ENCODE measurements at regions of chr7 and their contacts with region 1.

Region 1: DNA sequence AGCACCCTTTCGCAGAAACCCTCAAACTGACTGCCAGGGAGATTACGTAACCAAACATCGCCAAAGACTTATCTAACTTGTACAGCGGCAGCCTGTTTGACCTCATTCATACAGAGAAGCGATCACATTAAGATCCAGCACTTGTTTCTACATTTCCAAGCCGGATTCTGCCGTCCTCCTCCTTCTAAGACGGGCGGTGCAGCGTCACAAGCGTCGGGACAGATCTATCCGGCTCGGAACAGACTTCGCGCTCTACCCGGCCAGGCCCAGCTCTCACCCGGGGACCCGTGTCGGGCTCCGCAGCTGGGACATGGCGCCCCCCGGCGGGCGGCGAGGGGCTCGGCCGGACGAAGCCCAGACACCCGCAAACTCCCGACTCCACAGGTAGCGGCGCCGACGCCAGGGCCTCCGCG is 373 bp downstream of the H2AZ2 start:
- DNase-seq: peak; percentile 82 to 87
- ATAC-seq: peak; percentile 78 to 82
- H3K4me3 ChIP-seq: peak overlapping the region; percentile 65 to 72 (median 66)
- H3K27ac ChIP-seq: peak overlapping the region; percentile 90 to 93 (median 92)
- H3K4me1 ChIP-seq: peaks cover 24 to 43% of the 10 kb centered on the region in 2 donors
- H3K27me3 ChIP-seq: no peaks in the 10 kb centered on the region
- CTCF ChIP-seq: peak; percentile 92 to 98 (median 98)
- POLR2A ChIP-seq: no peak

Region 2: GRCh38 chr7:44490351-44491200 is 356.9 kb before region 1 on chr7 and contains the start of gene NUDCD3:
- in situ Hi-C with region 1: no loop called
- intact Hi-C with region 1: loop called (anchors 5 kb)
- DNase-seq: peak; percentile 83
- ATAC-seq: peak; percentile 86 to 91
- H3K4me3 ChIP-seq: peak within 1 kb of the TSS; percentile 76 to 96 (median 88)
- H3K27ac ChIP-seq: peak within 1 kb of the TSS; percentile 90 to 99 (median 96)
- H3K4me1 ChIP-seq: peaks cover 39 to 40% of the 10 kb centered on the region in 2 donors
- H3K27me3 ChIP-seq: no peaks in the 10 kb centered on the region
- CTCF ChIP-seq: peak; percentile 7 to 48 (median 23)
- POLR2A ChIP-seq: peak; percentile 64 to 80
- total RNA-seq, gene NUDCD3: 76.2 to 93.4 (median 77.0) TPM

Region 3: DNA sequence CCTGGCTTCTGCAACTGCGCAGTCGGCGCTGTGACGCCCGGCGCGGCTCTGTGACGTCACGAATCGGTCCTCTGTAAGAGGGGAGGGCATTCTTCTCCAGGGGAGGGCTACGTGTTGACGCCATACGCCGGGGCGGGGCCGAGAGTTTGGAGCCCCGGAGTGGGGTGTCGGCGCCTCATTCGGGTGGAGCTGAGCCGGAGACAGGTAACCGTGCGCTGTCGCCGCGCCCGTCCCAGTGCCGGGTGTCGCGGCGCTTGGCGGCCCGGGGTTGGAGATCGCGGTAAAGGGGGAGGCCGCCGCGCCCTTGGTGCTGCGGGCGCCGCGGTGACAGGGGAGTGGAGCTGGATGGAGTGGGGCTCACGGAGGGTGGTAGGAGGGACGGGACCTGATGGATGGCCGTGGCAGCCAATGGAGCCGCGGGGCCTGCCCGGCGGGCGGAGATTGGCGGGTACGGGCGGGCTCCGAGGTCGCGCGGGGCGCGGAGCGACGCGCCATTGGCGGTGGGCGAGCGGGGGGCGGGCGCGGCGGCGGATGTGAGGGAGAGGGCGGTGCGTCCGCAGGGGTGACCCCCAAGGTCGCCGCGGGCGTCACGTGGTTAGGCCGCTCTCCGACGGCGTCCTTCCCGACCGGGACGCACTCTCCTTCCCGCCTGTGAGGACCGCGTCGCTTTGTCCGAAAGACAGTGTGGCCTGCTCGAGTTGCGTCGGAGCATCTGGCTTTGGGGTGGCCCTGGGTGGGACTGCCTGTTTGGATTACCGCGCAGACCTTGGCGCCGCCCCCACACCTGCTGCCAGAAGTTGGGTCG is 240.9 kb before region 1 on chr7 and contains the start of gene OGDH:
- in situ Hi-C with region 1: no loop called
- intact Hi-C with region 1: loop called (anchors 5 kb)
- DNase-seq: peak; percentile 98
- ATAC-seq: peak; percentile 88 to 92
- H3K4me3 ChIP-seq: peak within 1 kb of the TSS; percentile 72 to 88 (median 82)
- H3K27ac ChIP-seq: peak within 1 kb of the TSS; percentile 91 to 99 (median 96)
- H3K4me1 ChIP-seq: peaks cover 13 to 14% of the 10 kb centered on the region in 2 donors
- H3K27me3 ChIP-seq: no peaks in the 10 kb centered on the region
- CTCF ChIP-seq: peak in 1 of 5 experiments; percentile 23
- POLR2A ChIP-seq: peak; percentile 98
- total RNA-seq, gene OGDH: 224 to 462 (median 396) TPM

Region 4: GRCh38 chr7:44797329-44798251 is 49.9 kb before region 1 on chr7:
- in situ Hi-C with region 1: no loop called
- intact Hi-C with region 1: loop called (anchors 1 kb)
- DNase-seq: peak; percentile 81 to 86
- ATAC-seq: peak; percentile 75 to 76
- H3K4me3 ChIP-seq: peak overlapping the region; percentile 72 to 79 (median 75)
- H3K27ac ChIP-seq: peak overlapping the region; percentile 89 to 97 (median 96)
- H3K4me1 ChIP-seq: peaks cover 16 to 23% of the 10 kb centered on the region in 2 donors
- H3K27me3 ChIP-seq: no peaks in the 10 kb centered on the region
- CTCF ChIP-seq: peak in 2 of 5 experiments; percentile 29 to 52
- POLR2A ChIP-seq: peak in 1 of 2 donors; percentile 27

Region 5: DNA sequence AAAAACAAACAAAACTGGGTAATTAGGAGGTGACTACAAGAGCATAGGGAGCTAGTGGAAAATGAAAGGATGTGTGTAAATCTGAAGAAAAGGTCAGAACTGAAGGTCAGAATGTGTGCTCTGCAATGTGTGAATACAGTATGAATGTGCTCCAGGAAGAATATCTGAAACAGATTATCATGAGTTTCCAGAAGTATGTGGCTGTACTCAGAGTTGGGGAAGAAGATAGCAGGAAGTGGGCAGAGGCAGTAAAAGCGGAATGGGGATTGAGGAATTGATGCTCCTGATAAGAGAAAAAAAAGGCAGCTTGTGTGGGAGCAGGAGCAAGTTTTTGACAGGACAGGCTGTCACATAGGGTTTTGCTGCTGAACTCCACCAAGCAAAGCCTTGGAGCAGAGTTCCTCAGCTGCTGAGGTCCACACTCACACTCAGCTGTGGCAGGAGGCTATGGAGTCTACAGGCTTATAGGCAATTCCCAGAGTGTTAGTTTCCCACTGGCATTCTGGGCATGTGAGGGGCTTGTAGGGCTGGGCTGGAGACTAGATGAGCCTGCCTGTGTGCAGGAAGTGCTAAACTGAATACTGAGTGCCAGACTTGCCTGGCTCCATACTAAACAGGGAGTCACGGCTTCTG is 22.5 kb before region 1 on chr7:
- in situ Hi-C with region 1: no loop called
- intact Hi-C with region 1: no loop called
- DNase-seq: no peak
- ATAC-seq: no peak
- H3K4me3 ChIP-seq: no peak overlapping the region
- H3K27ac ChIP-seq: no peak overlapping the region
- H3K4me1 ChIP-seq: no peaks in the 10 kb centered on the region
- H3K27me3 ChIP-seq: no peaks in the 10 kb centered on the region
- CTCF ChIP-seq: no peak
- POLR2A ChIP-seq: no peak